ENCODE measurements at regions of chr19 and their contacts with region 1.

Region 1: GRCh38 chr19:16897154-16897855 is 8.5 kb downstream of the F2RL3 start:
- DNase-seq: peak; percentile 67
- ATAC-seq: peak; percentile 74
- H3K4me3 Mint-ChIP-seq: peak overlapping the region; percentile 81
- H3K27ac Mint-ChIP-seq: peak overlapping the region; percentile 24
- H3K4me1 Mint-ChIP-seq: peaks cover 46% of the 10 kb centered on the region
- H3K27me3 Mint-ChIP-seq: no peaks in the 10 kb centered on the region
- CTCF ChIP-seq: no peak

Region 2: GRCh38 chr19:16542045-16542909 is 355.0 kb before region 1 on chr19 and contains the start of gene CHERP:
- CTCF ChIA-PET with region 1: no interaction called
- POLR2A ChIA-PET with region 1: no interaction called
- intact Hi-C with region 1: loop called (anchors 1 kb)
- DNase-seq: peak; percentile 93
- ATAC-seq: peak; percentile 82
- H3K4me3 Mint-ChIP-seq: peak within 1 kb of the TSS; percentile 86
- H3K27ac Mint-ChIP-seq: peak within 1 kb of the TSS; percentile 76
- H3K4me1 Mint-ChIP-seq: peaks cover 61% of the 10 kb centered on the region
- H3K27me3 Mint-ChIP-seq: no peaks in the 10 kb centered on the region
- CTCF ChIP-seq: no peak
- total RNA-seq, gene CHERP: 70.9 and 89.3 TPM in 2 replicates

Region 3: GRCh38 chr19:16659831-16660708 is 237.2 kb before region 1 on chr19 and contains the start of gene SMIM7:
- CTCF ChIA-PET with region 1: no interaction called
- POLR2A ChIA-PET with region 1: interaction called, 5 read pairs
- intact Hi-C with region 1: loop called (anchors 2 kb)
- DNase-seq: peak; percentile 96
- ATAC-seq: peak; percentile 96
- H3K4me3 Mint-ChIP-seq: peak within 1 kb of the TSS; percentile 97
- H3K27ac Mint-ChIP-seq: peak within 1 kb of the TSS; percentile 95
- H3K4me1 Mint-ChIP-seq: peaks cover 50% of the 10 kb centered on the region
- H3K27me3 Mint-ChIP-seq: no peaks in the 10 kb centered on the region
- CTCF ChIP-seq: no peak
- total RNA-seq, gene SMIM7: 90.2 and 110 TPM in 2 replicates

Region 4: GRCh38 chr19:16771618-16772017 is 125.7 kb before region 1 on chr19:
- CTCF ChIA-PET with region 1: no interaction called
- POLR2A ChIA-PET with region 1: no interaction called
- intact Hi-C with region 1: loop called (anchors 1 kb)
- DNase-seq: peak; percentile 48
- ATAC-seq: peak; percentile 75
- H3K4me3 Mint-ChIP-seq: no peak overlapping the region
- H3K27ac Mint-ChIP-seq: no peak overlapping the region
- H3K4me1 Mint-ChIP-seq: peaks cover 1% of the 10 kb centered on the region
- H3K27me3 Mint-ChIP-seq: peaks cover 3% of the 10 kb centered on the region
- CTCF ChIP-seq: no peak

Region 5: DNA sequence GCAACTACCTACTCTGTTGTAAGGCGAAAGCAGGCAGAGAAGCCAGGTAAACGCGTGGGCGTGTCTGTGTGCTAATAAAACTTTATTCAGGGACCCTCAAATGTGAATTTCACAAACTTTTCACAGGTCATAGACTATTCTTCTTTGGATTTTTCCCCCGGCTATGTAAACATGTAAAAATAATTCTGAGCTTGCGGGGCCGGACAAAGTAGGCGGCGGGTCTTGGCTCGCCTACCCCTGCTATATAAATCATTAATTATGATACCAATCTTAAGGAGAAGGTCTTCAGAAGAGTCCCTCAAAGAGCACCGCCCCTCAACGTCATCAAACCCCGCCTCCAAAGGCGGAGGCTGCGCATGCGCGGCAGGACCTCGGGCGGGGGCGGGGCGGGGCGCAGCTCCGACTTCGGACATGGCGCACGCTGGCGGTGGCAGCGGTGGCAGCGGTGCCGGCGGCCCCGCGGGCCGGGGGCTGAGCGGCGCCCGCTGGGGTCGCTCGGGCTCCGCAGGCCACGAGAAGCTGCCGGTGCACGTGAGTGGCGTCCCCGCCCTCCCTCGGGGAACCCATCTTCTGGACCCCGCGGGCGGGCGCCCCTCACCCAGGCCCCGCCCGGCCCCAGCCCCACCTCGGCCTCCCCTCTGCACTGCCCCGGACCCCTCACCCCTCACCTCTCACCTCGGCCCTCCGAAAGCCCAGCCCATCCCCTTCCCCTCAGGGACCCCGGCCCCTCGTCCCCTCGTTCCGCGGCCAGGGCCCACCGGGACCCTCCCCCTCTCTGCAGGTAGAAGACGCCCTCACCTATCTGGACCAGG is 68.1 kb before region 1 on chr19 and contains the start of gene SIN3B:
- CTCF ChIA-PET with region 1: interaction called, 3 read pairs
- POLR2A ChIA-PET with region 1: interaction called, 4 read pairs
- intact Hi-C with region 1: loop called (anchors 2 kb)
- DNase-seq: peak; percentile 95
- ATAC-seq: peak; percentile 88
- H3K4me3 Mint-ChIP-seq: peak within 1 kb of the TSS; percentile 86
- H3K27ac Mint-ChIP-seq: peak within 1 kb of the TSS; percentile 77
- H3K4me1 Mint-ChIP-seq: peaks cover 46% of the 10 kb centered on the region
- H3K27me3 Mint-ChIP-seq: peaks cover 28% of the 10 kb centered on the region
- CTCF ChIP-seq: no peak
- total RNA-seq, gene SIN3B: 63.7 and 73.1 TPM in 2 replicates

Region 6: GRCh38 chr19:16951529-16951928 is 54.2 kb after region 1 on chr19:
- CTCF ChIA-PET with region 1: no interaction called
- POLR2A ChIA-PET with region 1: no interaction called
- intact Hi-C with region 1: no loop called
- DNase-seq: no peak
- ATAC-seq: no peak
- H3K4me3 Mint-ChIP-seq: no peak overlapping the region
- H3K27ac Mint-ChIP-seq: no peak overlapping the region
- H3K4me1 Mint-ChIP-seq: no peaks in the 10 kb centered on the region
- H3K27me3 Mint-ChIP-seq: peaks cover 25% of the 10 kb centered on the region
- CTCF ChIP-seq: no peak

Region 7: DNA sequence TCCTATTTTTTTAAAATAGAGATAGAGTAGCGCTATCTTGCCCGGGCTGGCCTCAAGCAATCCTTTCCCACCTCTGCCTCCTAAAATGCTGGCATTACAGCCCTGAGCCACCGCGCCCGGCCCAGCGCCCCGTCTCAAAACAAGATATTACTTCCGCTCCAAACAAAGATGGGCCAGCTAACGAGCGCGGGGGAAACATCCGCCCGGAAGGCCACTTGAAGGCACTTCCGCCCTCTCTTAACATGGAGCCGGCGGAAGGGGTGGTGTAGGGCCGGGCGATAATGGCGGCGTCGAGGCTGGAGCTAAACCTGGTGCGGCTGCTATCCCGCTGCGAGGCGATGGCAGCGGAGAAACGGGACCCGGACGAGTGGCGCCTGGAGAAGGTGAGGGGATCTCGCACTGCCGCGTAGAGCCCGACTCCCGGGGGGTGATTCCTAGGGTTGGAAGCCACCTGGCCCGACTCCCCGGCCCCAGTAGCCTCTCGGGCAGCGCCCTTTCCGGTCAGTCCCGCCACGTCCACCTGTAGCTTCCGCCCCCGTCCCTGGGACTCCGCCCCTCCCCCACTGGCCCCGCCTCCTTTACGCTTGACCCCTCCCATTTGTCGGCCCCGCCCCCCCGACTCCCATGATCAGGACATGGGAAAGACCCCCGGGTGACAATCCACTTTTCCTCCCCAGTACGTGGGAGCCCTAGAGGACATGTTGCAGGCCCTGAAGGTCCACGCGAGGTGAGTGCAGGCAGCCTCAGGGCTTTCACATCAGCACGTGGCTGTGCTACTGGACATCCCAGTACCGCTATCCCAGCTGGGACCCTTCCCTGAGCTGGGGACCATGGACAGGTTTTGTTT is 318.0 kb after region 1 on chr19 and contains the start of gene USE1:
- CTCF ChIA-PET with region 1: no interaction called
- POLR2A ChIA-PET with region 1: interaction called, 4 read pairs
- intact Hi-C with region 1: loop called (anchors 10 kb)
- DNase-seq: peak; percentile 73
- ATAC-seq: peak; percentile 92
- H3K4me3 Mint-ChIP-seq: peak within 1 kb of the TSS; percentile 91
- H3K27ac Mint-ChIP-seq: peak within 1 kb of the TSS; percentile 96
- H3K4me1 Mint-ChIP-seq: peaks cover 19% of the 10 kb centered on the region
- H3K27me3 Mint-ChIP-seq: no peaks in the 10 kb centered on the region
- CTCF ChIP-seq: no peak
- total RNA-seq, gene USE1: 41.9 and 43.4 TPM in 2 replicates

Measured in activated B cell treated with CpG ODN at 0.5 μM for 24 hours (primary cell).